Heart left ventricle (tissue), 16 donors: ENCODE measurements at regions of chr14 and their contacts with region 1.

Region 1: DNA sequence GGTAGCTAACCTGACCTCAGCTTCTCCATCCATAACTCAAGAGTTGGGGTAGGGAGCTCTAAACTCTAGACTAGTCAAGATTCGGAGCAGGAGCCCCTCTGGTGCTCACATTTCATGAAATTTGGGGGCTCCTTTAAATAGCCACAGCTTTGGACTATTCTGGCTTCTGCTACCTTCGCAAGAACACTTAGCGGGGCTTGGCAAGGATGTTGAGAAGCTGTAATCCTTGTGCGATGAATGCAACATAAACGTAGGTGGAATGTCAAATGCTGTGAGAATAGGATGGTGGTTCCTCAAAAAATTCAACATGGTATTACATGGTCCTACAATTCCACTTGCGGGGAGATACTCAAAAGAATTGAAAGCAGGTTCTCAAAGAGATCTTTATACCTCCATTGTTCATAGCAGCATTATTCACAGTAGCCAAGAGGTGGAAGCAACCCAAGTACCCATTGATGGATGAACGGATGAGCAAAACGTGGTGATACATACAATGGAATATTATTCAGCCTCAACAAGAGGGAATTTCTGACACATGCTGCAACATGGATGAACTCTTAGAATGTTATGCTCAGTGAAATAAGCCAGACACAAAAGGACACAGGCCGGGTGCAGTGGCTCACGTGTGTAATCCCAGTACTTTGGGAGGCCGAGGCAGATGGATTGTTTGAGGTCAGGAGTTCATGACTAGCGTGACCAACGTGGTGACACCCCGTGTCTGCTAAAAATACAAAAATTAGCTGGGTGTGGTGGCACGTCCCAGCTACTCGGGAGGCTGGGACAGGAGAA is 73.8 kb downstream of the ACTN1 start:
- DNase-seq: peak in 1 of 5 donors; percentile 2
- ATAC-seq: no peak
- H3K4me3 ChIP-seq: no peak overlapping the region
- H3K27ac ChIP-seq: peak overlapping the region in 1 of 12 donors; percentile 72
- H3K4me1 ChIP-seq: peaks cover 0 to 7% (median 0%) of the 10 kb centered on the region in 12 donors
- H3K27me3 ChIP-seq: no peaks in the 10 kb centered on the region
- CTCF ChIP-seq: no peak
- POLR2A ChIP-seq: no peak

Region 2: DNA sequence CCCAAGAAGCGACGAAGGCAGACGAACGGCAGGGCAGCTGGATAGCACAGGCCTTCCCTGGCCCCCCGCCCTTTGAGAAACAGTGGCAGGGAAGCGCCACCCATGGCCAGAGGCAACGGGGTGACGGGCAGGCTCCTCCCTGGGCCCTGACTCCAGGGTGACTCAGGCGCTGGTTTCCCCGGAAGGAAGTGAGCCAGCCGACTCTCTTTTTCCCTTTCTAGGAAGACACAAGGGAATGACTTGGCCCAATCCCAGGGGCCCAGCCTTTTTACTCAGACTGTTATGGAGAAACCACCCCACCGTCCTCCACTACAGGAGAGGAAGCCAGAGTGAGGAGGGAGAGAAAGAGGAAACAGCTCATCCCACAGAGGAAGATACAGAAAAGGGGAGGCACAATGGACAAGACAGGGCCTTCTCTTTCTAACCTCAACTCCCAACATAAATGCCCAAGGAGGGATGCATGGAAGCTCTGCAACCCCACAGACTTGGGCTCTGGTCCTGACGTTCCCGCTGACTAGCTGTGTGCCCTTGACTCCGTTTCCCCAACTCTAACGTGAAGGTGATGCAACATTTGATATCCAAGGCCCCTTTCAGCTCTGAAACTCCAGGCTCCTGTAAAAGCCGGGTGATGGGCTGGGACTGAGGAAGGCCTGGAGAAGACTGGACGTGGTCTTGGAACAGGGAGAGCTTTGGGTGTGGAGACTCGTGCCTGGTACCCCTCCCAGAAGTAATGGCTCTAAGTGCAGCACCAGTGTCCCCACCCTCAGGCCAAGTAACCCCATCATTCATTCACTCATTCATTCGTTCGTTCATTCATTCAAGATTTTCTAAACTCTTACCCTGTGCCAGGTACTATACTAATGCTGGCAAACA is 46.0 kb after region 1 on chr14:
- intact Hi-C with region 1: no loop called
- DNase-seq: peak; percentile 74 to 93 (median 86)
- ATAC-seq: peak in 3 of 4 donors; percentile 15 to 58 (median 55)
- H3K4me3 ChIP-seq: no peak overlapping the region
- H3K27ac ChIP-seq: peak overlapping the region; percentile 63 to 98 (median 80)
- H3K4me1 ChIP-seq: peaks cover 50 to 100% (median 95%) of the 10 kb centered on the region in 12 donors
- H3K27me3 ChIP-seq: no peaks in the 10 kb centered on the region
- CTCF ChIP-seq: no peak
- POLR2A ChIP-seq: peak in 1 of 2 donors; percentile 18

Region 3: DNA sequence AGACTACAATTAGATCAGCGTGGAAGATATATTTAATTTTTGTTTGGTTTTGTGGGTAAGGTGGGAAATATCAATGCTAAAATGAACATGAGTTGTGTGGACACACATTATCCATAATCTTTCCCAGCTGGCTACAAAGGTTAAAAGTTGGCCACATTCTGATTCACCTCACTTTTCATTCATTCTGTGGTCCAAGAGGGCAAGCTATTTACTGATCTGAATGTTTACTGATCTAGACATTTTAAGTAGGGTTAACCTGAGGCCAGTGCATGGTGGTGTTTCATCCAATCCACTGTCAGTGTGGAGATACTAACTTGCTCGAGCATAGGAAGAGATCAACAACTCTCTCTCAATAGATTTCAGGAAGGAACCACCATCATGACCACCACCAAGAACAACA is 176.0 kb after region 1 on chr14:
- intact Hi-C with region 1: loop called in 4 of 10 experiments (anchors 5 kb)
- DNase-seq: no peak
- ATAC-seq: no peak
- H3K4me3 ChIP-seq: no peak overlapping the region
- H3K27ac ChIP-seq: peak overlapping the region in 1 of 12 donors; percentile 1
- H3K4me1 ChIP-seq: peaks cover 0 to 28% (median 16%) of the 10 kb centered on the region in 12 donors
- H3K27me3 ChIP-seq: no peaks in the 10 kb centered on the region
- CTCF ChIP-seq: no peak
- POLR2A ChIP-seq: no peak

Region 4: GRCh38 chr14:69428289-69428998 is 523.1 kb after region 1 on chr14:
- intact Hi-C with region 1: no loop called
- DNase-seq: no peak
- ATAC-seq: no peak
- H3K4me3 ChIP-seq: no peak overlapping the region
- H3K27ac ChIP-seq: no peak overlapping the region
- H3K4me1 ChIP-seq: peaks cover 0 to 6% (median 0%) of the 10 kb centered on the region in 12 donors
- H3K27me3 ChIP-seq: no peaks in the 10 kb centered on the region
- CTCF ChIP-seq: no peak
- POLR2A ChIP-seq: no peak